A549 (cell line): ENCODE measurements at regions of chr17 and their contacts with region 1.

Region 1: GRCh38 chr17:57783106-57783742 is 38.1 kb upstream of the CCDC182 start:
- DNase-seq: peak; percentile 66 to 84
- ATAC-seq: peak; percentile 89 to 96
- H3K4me3 ChIP-seq: peak overlapping the region; percentile 20; the same call in 1 of the 3 replicates
- H3K27ac ChIP-seq: peak overlapping the region; percentile 45 to 79; a peak in 4 of 6 replicates
- H3K4me1 ChIP-seq: 0 out of 3 replicates have a peak, but pooled peaks cover 5% of the 10 kb centered on the region
- CTCF ChIP-seq: peak; percentile 95
- EP300 ChIP-seq: no peak
- POLR2A ChIP-seq: no peak
- RAD21 ChIP-seq: peak; percentile 81 to 91

Region 2: GRCh38 chr17:57142925-57143324 is 640.3 kb before region 1 on chr17:
- CTCF ChIA-PET with region 1: interaction called, 13 read pairs
- POLR2A ChIA-PET with region 1: no interaction called
- DNase-seq: peak in 1 of 2 experiments; percentile 18
- ATAC-seq: no peak
- H3K4me3 ChIP-seq: no peak overlapping the region
- H3K27ac ChIP-seq: no peak overlapping the region
- H3K4me1 ChIP-seq: no peaks in the 10 kb centered on the region
- CTCF ChIP-seq: no peak
- EP300 ChIP-seq: no peak
- POLR2A ChIP-seq: no peak
- RAD21 ChIP-seq: no peak

Region 3: DNA sequence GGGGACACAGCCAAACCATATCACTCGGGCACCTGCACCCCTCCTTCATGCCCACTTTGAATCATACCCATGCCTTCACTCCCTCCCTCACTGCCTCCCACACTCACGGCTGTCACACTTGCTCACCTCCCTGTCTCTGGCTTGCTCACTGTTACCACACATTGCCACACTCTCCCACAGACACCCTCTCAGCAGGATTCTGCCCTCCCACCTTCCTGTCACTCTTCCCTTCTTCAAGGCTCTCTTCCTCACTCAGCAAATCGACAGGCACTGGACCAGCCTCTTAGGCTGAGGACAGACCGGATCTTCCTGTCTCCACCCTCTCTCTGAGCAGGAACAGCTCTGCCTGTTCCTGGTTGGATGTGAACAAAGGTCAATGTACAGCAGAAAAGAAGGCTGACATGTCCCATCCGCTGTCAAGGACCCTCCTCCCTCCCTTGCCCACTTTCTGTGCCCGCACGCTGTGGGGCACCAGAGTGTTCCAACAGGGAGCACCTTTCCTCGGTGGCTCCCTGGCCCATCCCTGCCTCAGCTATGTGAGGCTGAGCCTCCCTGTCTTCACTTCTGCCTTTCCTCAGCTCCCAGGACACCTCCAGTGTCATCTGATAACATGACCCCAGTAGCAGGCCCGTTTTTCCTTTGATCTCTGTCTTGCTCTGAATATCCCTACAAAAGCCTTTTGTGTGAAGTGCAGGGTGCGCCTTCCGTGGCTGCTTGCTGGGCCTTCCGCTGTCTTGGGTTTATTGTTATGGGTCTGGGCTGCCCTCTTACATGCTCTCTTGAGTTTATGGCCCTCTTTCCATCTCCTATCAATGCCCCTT is 85.1 kb before region 1 on chr17:
- CTCF ChIA-PET with region 1: interaction called, 12 read pairs
- POLR2A ChIA-PET with region 1: no interaction called
- DNase-seq: no peak
- ATAC-seq: no peak
- H3K4me3 ChIP-seq: no peak overlapping the region
- H3K27ac ChIP-seq: no peak overlapping the region
- H3K4me1 ChIP-seq: no peaks in the 10 kb centered on the region
- CTCF ChIP-seq: no peak
- EP300 ChIP-seq: no peak
- POLR2A ChIP-seq: no peak
- RAD21 ChIP-seq: no peak

Region 4: DNA sequence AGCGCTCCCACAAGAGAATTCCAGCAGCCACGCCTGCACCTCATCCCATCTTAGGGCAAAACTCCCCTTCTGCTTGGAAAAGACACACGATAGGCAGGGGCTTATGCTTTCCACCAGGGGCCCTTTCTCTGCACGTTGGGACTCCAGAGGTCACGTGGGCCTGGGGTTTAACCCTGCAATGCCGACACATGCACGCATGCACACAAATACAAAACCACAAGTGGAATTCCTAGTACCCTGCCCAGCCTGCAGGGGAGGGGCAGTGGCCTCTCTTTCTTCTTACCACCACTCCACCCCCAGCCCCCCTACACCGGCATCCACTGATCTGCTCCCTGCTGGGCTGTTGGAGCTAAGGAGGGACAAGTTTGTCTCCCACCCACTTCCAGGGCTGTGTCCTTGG is 21.3 kb before region 1 on chr17:
- CTCF ChIA-PET with region 1: interaction called, 124 read pairs
- POLR2A ChIA-PET with region 1: no interaction called
- DNase-seq: no peak
- ATAC-seq: no peak; a peak in 2 of 6 replicates
- H3K4me3 ChIP-seq: no peak overlapping the region
- H3K27ac ChIP-seq: 0 out of 6 replicates have a peak overlapping the region, but pooled peaks of 1 of the 2 experiments have one; percentile 6
- H3K4me1 ChIP-seq: peaks cover 15% of the 10 kb centered on the region
- CTCF ChIP-seq: no peak
- EP300 ChIP-seq: no peak
- POLR2A ChIP-seq: no peak
- RAD21 ChIP-seq: no peak

Region 5: DNA sequence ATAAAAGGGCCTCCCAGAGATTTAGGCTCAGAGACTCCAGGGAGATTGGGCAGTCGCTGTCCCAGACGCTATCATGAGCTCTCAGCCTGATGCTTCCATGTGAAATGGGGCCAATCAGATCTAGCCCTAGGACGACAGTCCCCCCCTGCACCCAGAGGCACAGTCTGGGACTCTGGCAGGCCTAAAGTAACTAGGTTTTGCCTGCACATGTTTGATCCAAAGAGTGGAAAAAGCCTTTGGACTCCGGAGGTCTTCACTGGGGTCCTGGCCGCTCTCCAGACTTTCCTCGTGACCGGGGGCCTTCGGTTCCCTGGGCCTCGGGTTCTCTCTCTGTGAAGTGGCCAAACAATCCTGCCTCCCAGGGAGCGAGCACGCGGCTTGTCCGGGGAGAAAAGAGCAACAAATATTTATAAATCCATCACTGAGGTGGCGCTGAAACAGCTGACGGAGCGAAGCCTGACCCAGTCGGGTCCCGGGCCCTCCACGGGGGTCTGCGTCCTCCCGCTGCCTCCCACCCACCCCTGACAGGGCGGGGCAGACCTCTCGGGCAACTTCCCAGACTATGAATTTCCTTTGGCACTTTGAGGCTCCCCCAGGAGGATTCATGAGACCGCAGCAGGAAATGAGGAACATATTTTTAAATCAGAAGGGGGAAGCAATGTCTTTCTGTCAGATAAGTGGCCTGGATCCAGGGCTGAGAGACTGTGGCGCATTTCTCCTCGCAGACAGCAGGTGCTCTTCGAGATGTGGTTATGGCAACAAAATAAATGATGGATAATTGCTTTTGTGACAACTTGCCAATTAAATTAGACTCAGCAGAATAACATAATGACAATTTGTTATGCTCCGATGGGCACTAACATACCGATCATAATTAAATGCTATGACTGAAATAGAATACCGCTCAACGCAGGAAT is 27.8 kb after region 1 on chr17:
- CTCF ChIA-PET with region 1: interaction called, 50 read pairs
- POLR2A ChIA-PET with region 1: no interaction called
- DNase-seq: no peak
- ATAC-seq: peak; percentile 43 to 63; a peak in 4 of 6 replicates
- H3K4me3 ChIP-seq: no peak overlapping the region
- H3K27ac ChIP-seq: no peak overlapping the region
- H3K4me1 ChIP-seq: no peaks in the 10 kb centered on the region
- CTCF ChIP-seq: no peak
- EP300 ChIP-seq: no peak
- POLR2A ChIP-seq: no peak
- RAD21 ChIP-seq: no peak